MCF 10A (cell line): ENCODE measurements at regions of chr1 and their contacts with region 1.

Region 1: GRCh38 chr1:148372731-148373130 is 110.4 kb downstream of the PPIAL4G start:
- DNase-seq: peak; percentile 43
- H3K4me3 Mint-ChIP-seq: no peak overlapping the region
- H3K27ac Mint-ChIP-seq: peak overlapping the region; percentile 5
- H3K4me1 Mint-ChIP-seq: peaks cover 21% of the 10 kb centered on the region
- H3K27me3 Mint-ChIP-seq: no peaks in the 10 kb centered on the region
- CTCF ChIP-seq: no peak

Region 2: DNA sequence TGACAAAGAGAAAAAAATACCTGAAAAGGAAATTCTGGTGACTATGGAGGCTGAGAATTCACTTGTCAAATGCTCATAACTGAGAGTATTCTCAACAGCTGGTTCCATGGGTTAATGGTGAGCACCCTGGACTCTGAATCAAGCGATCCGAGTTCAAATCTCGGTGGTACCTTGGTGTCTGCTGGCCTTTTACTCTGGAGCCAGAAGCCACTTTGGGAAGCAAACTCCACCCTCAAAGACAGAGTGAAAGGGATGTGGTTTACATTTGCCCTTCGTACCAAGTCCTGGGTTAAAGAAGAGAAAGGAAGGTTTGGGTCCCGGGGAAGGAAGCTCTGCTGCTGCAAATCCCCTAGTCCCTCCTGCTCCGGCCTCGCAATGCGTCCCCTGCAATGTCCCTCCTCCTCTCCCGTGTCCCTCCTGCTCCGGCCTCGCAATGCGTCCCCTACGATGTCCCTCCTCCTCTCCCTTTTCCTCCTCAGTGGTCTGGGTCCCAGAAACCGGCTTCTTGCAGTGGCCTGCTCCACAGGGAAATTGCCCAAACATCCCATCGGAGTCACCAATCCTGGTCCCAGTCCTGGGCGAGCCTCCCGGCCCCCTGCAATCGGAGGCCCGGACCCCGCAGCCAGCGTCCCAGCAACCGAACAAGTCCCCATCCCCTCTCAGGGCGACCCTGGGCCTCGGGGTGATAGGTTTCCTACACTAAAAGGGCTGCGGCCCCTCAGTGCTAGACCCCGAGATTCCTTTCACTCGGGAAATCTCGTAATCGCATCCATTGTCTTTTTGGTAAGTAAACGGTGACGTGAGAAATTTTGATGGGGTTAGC is 19.1 kb before region 1 on chr1:
- CTCF ChIA-PET with region 1: interaction called, 20 read pairs
- POLR2A ChIA-PET with region 1: interaction called, 3 read pairs
- intact Hi-C with region 1: no loop called
- DNase-seq: peak; percentile 49
- H3K4me3 Mint-ChIP-seq: no peak overlapping the region
- H3K27ac Mint-ChIP-seq: no peak overlapping the region
- H3K4me1 Mint-ChIP-seq: peaks cover 11% of the 10 kb centered on the region
- H3K27me3 Mint-ChIP-seq: peaks cover 68% of the 10 kb centered on the region
- CTCF ChIP-seq: no peak

Region 3: DNA sequence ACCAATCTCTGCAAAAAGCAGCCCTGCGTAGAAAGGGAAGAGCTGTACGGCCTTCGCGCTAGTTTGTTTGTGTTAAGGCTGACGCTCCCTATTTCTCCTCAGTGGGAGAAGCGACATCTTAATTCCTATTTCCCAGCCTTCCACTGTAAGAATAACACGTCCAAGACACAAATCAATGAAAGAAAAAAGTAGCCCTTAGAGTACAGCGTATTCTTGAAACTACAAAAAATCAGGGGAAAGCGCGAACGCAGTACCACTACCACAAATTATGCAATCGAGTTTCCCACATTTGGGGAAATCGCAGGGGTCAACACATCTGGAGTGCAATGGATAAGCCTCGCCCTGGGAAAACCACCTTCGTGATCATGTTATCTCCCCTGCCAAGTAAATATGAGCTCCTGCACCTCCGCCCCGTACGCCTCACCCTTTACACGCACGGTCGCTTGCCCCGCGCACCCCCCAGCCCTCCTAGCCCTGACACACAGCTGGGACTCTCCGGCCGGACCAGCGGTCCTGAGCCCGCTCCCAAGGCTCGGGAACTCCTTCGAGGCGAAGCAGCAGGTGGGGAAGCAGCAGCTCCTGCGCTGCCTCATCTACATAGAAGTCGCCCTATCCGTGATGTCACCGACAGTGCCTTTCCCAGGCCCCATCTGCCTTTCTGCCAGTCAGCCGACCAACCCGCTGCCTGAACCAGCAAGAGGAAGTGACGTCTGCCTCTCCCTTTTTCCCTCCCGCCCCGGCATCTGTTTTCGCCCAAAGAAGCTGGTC is 15.7 kb after region 1 on chr1:
- CTCF ChIA-PET with region 1: interaction called, 53 read pairs
- POLR2A ChIA-PET with region 1: interaction called, 8 read pairs
- intact Hi-C with region 1: no loop called
- DNase-seq: peak; percentile 97
- H3K4me3 Mint-ChIP-seq: peak overlapping the region; percentile 88
- H3K27ac Mint-ChIP-seq: peak overlapping the region; percentile 100
- H3K4me1 Mint-ChIP-seq: peaks cover 13% of the 10 kb centered on the region
- H3K27me3 Mint-ChIP-seq: no peaks in the 10 kb centered on the region
- CTCF ChIP-seq: no peak